ENCODE measurements at regions of chr2 and their contacts with region 1.

Region 1: DNA sequence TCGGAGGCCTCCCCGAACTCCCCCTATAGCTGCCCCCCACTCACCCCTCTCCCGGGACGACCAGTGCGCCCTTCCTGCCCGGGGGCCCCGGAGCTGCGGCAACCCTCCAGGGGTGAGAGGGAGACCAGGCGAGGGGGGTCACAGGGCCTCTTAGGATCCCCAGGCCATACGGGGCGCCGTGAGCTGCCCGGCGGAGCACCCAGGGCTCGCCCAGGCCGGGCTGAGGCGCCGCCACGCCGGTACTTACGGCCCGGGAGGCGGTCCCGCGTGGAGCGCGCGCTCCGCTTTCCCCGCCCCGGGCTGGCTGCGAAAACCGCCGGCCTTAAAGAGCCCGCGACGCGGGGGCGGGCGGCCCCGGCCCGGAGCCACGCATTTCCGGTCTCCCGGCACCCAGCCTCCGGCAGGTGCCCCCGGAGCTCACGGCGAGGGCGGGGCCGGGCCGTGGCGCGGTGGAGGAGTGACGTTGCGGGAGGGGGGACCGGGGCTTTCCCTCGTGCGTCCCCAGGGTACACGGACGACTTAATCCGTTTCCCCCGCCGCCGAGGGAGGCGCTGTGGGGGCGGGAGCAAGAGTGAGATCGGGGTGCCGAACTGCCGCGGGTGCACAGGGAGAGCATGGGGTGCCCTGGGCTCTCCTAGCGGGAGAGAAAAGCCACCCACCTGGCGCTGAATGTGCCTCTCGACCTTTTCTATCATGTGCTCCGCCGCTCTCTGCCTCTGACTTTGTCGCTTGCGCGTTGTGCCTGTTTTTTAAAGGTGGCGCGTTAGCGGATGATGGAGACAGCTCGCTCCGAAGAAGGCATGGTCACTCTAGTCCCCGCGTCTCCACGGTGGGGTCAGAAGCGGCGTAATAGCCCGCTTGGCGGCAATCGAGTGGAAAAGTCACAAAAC is at the start of gene METTL21A:
- DNase-seq: peak; percentile 91 to 98
- ATAC-seq: peak; percentile 81 to 93 (median 85)
- H3K4me3 ChIP-seq: peak within 1 kb of the TSS; percentile 87
- H3K4me3 Mint-ChIP-seq: peak within 1 kb of the TSS; percentile 95
- H3K27ac ChIP-seq: peak within 1 kb of the TSS; percentile 97
- H3K27ac Mint-ChIP-seq: peak within 1 kb of the TSS; percentile 88 to 89
- H3K4me1 ChIP-seq: peaks cover 23% of the 10 kb centered on the region
- H3K4me1 Mint-ChIP-seq: peaks cover 18 to 31% of the 10 kb centered on the region in 2 donors
- H3K27me3 ChIP-seq: no peaks in the 10 kb centered on the region
- H3K27me3 Mint-ChIP-seq: no peaks in the 10 kb centered on the region
- CTCF ChIP-seq: peak; percentile 62
- total RNA-seq, gene METTL21A: 10.1 to 11.5 (median 11.0) TPM

Region 2: GRCh38 chr2:206765242-206766056 is 859.8 kb before region 1 on chr2 and contains the starts of genes FASTKD2 and MDH1B:
- intact Hi-C with region 1: loop called (anchors 5 kb)
- DNase-seq: peak; percentile 81 to 93
- ATAC-seq: peak; percentile 86 to 94 (median 87)
- H3K4me3 ChIP-seq: peak within 1 kb of the TSS; percentile 54
- H3K4me3 Mint-ChIP-seq: peak within 1 kb of the TSS; percentile 91
- H3K27ac ChIP-seq: peak within 1 kb of the TSS; percentile 86
- H3K27ac Mint-ChIP-seq: peak within 1 kb of the TSS in 1 of 2 donors; percentile 92
- H3K4me1 ChIP-seq: peaks cover 11% of the 10 kb centered on the region
- H3K4me1 Mint-ChIP-seq: peaks cover 19 to 22% of the 10 kb centered on the region in 2 donors
- H3K27me3 ChIP-seq: peaks cover 2% of the 10 kb centered on the region
- H3K27me3 Mint-ChIP-seq: peaks cover 0 to 2% of the 10 kb centered on the region in 2 donors
- CTCF ChIP-seq: no peak
- total RNA-seq, gene FASTKD2: 15.9 to 21.6 (median 17.0) TPM
- total RNA-seq, gene MDH1B: not detected

Region 3: GRCh38 chr2:207375192-207375861 is 249.9 kb before region 1 on chr2:
- intact Hi-C with region 1: no loop called
- DNase-seq: no peak
- ATAC-seq: no peak
- H3K4me3 ChIP-seq: no peak overlapping the region
- H3K4me3 Mint-ChIP-seq: no peak overlapping the region
- H3K27ac ChIP-seq: no peak overlapping the region
- H3K27ac Mint-ChIP-seq: no peak overlapping the region
- H3K4me1 ChIP-seq: no peaks in the 10 kb centered on the region
- H3K4me1 Mint-ChIP-seq: no peaks in the 10 kb centered on the region
- H3K27me3 ChIP-seq: no peaks in the 10 kb centered on the region
- H3K27me3 Mint-ChIP-seq: peaks cover 0 to 4% of the 10 kb centered on the region in 2 donors
- CTCF ChIP-seq: no peak

Region 4: DNA sequence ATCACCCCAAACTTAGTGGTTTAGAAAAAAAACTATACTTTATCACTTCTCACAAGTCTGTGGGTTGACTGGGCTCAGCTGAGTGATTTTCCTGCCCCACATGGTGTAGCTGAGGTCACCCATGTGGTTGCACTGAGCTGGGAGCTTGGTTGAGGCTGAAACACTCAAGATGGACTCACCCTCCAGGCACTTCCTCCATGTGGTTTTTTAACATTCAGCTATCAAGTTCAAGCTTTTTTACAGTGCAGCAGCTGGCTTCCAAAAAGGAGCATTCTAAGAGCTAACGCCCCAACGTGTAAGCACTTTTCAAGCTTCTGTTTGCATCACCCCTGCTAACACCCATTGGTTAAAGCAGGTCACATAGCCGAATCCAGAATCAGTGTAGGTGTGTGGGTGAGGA is 201.4 kb before region 1 on chr2:
- intact Hi-C with region 1: loop called (anchors 5 kb)
- DNase-seq: peak; percentile 42 to 61
- ATAC-seq: peak; percentile 87 to 100 (median 87)
- H3K4me3 ChIP-seq: no peak overlapping the region
- H3K4me3 Mint-ChIP-seq: peak overlapping the region; percentile 76
- H3K27ac ChIP-seq: peak overlapping the region; percentile 1
- H3K27ac Mint-ChIP-seq: peak overlapping the region; percentile 82 to 86
- H3K4me1 ChIP-seq: peaks cover 16% of the 10 kb centered on the region
- H3K4me1 Mint-ChIP-seq: peaks cover 36 to 39% of the 10 kb centered on the region in 2 donors
- H3K27me3 ChIP-seq: peaks cover 10% of the 10 kb centered on the region
- H3K27me3 Mint-ChIP-seq: peaks cover 36 to 40% of the 10 kb centered on the region in 2 donors
- CTCF ChIP-seq: no peak

Region 5: GRCh38 chr2:207710814-207711740 is 85.8 kb after region 1 on chr2 and contains the start of gene CCNYL1:
- intact Hi-C with region 1: loop called (anchors 1 kb)
- DNase-seq: peak; percentile 97 to 98
- ATAC-seq: peak; percentile 95 to 99 (median 95)
- H3K4me3 ChIP-seq: peak within 1 kb of the TSS; percentile 86
- H3K4me3 Mint-ChIP-seq: peak within 1 kb of the TSS; percentile 96
- H3K27ac ChIP-seq: peak within 1 kb of the TSS; percentile 71
- H3K27ac Mint-ChIP-seq: peak within 1 kb of the TSS; percentile 84 to 92
- H3K4me1 ChIP-seq: peaks cover 18% of the 10 kb centered on the region
- H3K4me1 Mint-ChIP-seq: peaks cover 21 to 26% of the 10 kb centered on the region in 2 donors
- H3K27me3 ChIP-seq: no peaks in the 10 kb centered on the region
- H3K27me3 Mint-ChIP-seq: peaks cover 0 to 8% of the 10 kb centered on the region in 2 donors
- CTCF ChIP-seq: no peak
- total RNA-seq, gene CCNYL1: 7.9 to 11.7 (median 10.2) TPM

Region 6: GRCh38 chr2:208040199-208041171 is 415.2 kb after region 1 on chr2:
- intact Hi-C with region 1: loop called (anchors 2 kb)
- DNase-seq: peak; percentile 46 to 75
- ATAC-seq: peak; percentile 79 to 83 (median 81)
- H3K4me3 ChIP-seq: no peak overlapping the region
- H3K4me3 Mint-ChIP-seq: no peak overlapping the region
- H3K27ac ChIP-seq: no peak overlapping the region
- H3K27ac Mint-ChIP-seq: no peak overlapping the region
- H3K4me1 ChIP-seq: no peaks in the 10 kb centered on the region
- H3K4me1 Mint-ChIP-seq: no peaks in the 10 kb centered on the region
- H3K27me3 ChIP-seq: no peaks in the 10 kb centered on the region
- H3K27me3 Mint-ChIP-seq: peaks cover 0 to 13% of the 10 kb centered on the region in 2 donors
- CTCF ChIP-seq: peak; percentile 71

Region 7: DNA sequence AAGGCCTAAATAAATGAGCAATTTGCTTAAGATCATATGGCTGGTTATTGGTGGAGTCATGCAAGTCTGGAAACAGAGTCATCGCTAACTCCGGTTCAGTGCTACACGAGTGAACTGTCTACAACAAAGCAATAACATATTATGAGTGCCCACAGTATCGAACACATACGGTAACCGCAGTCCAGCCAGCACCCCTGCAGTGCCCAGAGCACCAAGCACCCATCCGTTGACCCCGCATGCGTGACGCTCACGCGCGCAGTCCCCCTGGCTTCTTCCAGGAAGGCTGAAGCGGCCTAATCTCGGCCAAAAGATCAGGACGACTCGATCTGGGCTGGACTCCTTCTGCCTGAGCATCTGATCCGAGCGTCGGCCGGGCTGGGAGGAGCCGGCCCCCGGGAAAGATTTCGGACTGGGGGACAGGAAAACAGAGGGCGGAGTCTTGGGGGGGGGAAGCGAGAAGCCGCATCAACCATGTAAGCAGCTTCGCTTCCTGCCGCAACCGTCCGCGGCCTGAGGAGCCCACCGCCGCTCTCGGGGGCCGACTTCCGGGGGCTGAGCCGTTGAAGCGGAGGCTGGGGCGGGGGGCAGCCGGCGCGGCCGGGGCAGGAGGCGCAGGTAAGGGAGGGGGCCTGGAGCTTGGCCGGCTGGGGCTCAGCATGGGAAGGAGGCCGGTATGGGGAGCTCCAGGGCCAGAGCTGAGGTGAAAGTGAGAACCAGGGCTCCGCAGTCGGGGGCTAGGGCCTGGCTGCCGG is 640.7 kb after region 1 on chr2 and contains the start of gene PIKFYVE:
- intact Hi-C with region 1: loop called (anchors 5 kb)
- DNase-seq: peak; percentile 81 to 93
- ATAC-seq: peak; percentile 85 to 94 (median 89)
- H3K4me3 ChIP-seq: peak within 1 kb of the TSS; percentile 60
- H3K4me3 Mint-ChIP-seq: peak within 1 kb of the TSS; percentile 93
- H3K27ac ChIP-seq: peak within 1 kb of the TSS; percentile 75
- H3K27ac Mint-ChIP-seq: peak within 1 kb of the TSS; percentile 94 to 96
- H3K4me1 ChIP-seq: peaks cover 29% of the 10 kb centered on the region
- H3K4me1 Mint-ChIP-seq: peaks cover 30 to 48% of the 10 kb centered on the region in 2 donors
- H3K27me3 ChIP-seq: no peaks in the 10 kb centered on the region
- H3K27me3 Mint-ChIP-seq: no peaks in the 10 kb centered on the region
- CTCF ChIP-seq: no peak
- total RNA-seq, gene PIKFYVE: 38.9 to 48.7 (median 39.2) TPM